ENCODE measurements at regions of chr19 and their contacts with region 1.

Region 1: DNA sequence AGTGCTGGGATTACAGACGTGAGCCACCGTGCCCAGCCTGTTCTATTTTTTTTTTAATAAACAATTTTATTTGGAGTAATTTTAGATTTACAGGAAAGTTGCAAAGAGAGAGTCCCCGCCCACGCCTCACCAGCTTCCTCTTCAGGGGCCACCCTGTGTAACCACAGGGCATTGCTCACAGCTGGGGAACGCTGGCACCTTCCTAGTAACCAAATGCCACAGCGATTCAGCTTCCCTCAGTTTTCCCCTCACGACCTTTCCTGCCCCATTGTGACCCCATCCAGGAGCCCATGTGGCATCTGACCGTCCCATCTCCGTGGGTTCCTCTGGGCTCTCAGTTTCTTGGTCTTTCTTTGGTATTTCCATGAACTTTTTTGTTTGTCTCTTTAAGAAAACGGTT is 83.9 kb downstream of the GNG7 start:
- DNase-seq: no peak
- H3K4me3 ChIP-seq: no peak overlapping the region
- H3K27me3 ChIP-seq: no peaks in the 10 kb centered on the region
- CTCF ChIP-seq: no peak

Region 2: GRCh38 chr19:2636897-2637683 is 18.5 kb after region 1 on chr19:
- CTCF ChIA-PET with region 1: interaction called, 52 read pairs
- POLR2A ChIA-PET with region 1: no interaction called
- DNase-seq: no peak
- H3K4me3 ChIP-seq: no peak overlapping the region
- H3K27me3 ChIP-seq: peaks cover 2% of the 10 kb centered on the region; the same call in 1 of the 2 replicates
- CTCF ChIP-seq: peak; percentile 96